ENCODE measurements at regions of chr11 and their contacts with region 1.

Region 1: DNA sequence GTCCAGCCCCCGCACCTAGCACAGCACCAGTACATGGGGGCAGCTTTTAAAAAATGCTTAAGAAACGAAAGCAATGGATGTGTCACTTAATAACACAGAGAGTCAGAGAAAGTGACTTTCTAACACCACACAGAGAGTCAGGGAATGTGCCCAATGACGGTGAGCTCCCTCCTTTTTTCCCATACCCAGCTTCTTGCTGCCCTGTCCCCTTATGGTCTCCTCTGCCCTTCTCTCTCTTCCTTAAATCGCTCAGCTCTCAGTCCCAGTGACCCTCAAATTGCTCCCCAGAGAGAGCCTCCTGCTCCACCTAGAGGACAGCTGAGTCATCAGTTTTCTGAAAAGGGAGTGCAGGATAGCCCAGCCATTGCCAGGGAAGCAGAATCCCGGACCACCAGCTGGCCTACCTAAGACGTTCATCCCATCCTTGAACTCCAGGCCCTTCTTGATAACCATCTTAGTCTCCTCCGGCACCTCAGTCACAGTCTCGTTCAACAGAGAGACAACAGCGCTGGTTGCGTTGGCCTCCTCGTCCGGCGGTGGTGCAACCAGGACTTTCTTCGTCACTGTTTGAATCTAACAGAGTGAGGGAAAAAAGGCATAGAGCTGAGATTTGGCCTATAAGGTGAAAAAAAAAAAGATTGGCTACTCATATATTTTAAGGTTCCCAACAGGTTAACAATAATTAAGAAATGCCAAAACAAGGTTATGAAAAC is 113.5 kb downstream of the SLC1A2 start:
- DNase-seq: peak; percentile 18 to 76 (median 53)
- ATAC-seq: peak; percentile 73
- H3K4me3 ChIP-seq: peak overlapping the region; percentile 12 to 39
- H3K4me3 Mint-ChIP-seq: peak overlapping the region; percentile 79
- H3K27ac ChIP-seq: peak overlapping the region in 1 of 2 experiments; percentile 29
- H3K27ac Mint-ChIP-seq: peak overlapping the region; percentile 92
- H3K4me1 ChIP-seq: peaks cover 18% of the 10 kb centered on the region
- H3K4me1 Mint-ChIP-seq: peaks cover 16% of the 10 kb centered on the region
- H3K27me3 ChIP-seq: no peaks in the 10 kb centered on the region
- H3K27me3 Mint-ChIP-seq: no peaks in the 10 kb centered on the region
- CTCF ChIP-seq: peak; percentile 63

Region 2: GRCh38 chr11:34585735-34586487 is 719.9 kb before region 1 on chr11:
- CTCF ChIA-PET with region 1: interaction called, 5 read pairs
- POLR2A ChIA-PET with region 1: no interaction called
- intact Hi-C with region 1: loop called in 1 of 2 experiments (anchors 5 kb)
- DNase-seq: peak in 2 of 9 experiments; percentile 53 to 60
- ATAC-seq: no peak
- H3K4me3 ChIP-seq: no peak overlapping the region
- H3K4me3 Mint-ChIP-seq: no peak overlapping the region
- H3K27ac ChIP-seq: no peak overlapping the region
- H3K27ac Mint-ChIP-seq: no peak overlapping the region
- H3K4me1 ChIP-seq: no peaks in the 10 kb centered on the region
- H3K4me1 Mint-ChIP-seq: peaks cover 5% of the 10 kb centered on the region
- H3K27me3 ChIP-seq: no peaks in the 10 kb centered on the region
- H3K27me3 Mint-ChIP-seq: peaks cover 30% of the 10 kb centered on the region
- CTCF ChIP-seq: peak; percentile 78

Region 3: GRCh38 chr11:34997952-34998528 is 307.8 kb before region 1 on chr11:
- CTCF ChIA-PET with region 1: interaction called, 89 read pairs
- POLR2A ChIA-PET with region 1: interaction called, 5 read pairs
- intact Hi-C with region 1: loop called (anchors 1 kb)
- DNase-seq: peak in 2 of 9 experiments; percentile 38 to 54
- ATAC-seq: peak; percentile 58
- H3K4me3 ChIP-seq: no peak overlapping the region
- H3K4me3 Mint-ChIP-seq: no peak overlapping the region
- H3K27ac ChIP-seq: no peak overlapping the region
- H3K27ac Mint-ChIP-seq: peak overlapping the region; percentile 49
- H3K4me1 ChIP-seq: peaks cover 6% of the 10 kb centered on the region
- H3K4me1 Mint-ChIP-seq: peaks cover 14% of the 10 kb centered on the region
- H3K27me3 ChIP-seq: no peaks in the 10 kb centered on the region
- H3K27me3 Mint-ChIP-seq: no peaks in the 10 kb centered on the region
- CTCF ChIP-seq: peak; percentile 95

Region 4: DNA sequence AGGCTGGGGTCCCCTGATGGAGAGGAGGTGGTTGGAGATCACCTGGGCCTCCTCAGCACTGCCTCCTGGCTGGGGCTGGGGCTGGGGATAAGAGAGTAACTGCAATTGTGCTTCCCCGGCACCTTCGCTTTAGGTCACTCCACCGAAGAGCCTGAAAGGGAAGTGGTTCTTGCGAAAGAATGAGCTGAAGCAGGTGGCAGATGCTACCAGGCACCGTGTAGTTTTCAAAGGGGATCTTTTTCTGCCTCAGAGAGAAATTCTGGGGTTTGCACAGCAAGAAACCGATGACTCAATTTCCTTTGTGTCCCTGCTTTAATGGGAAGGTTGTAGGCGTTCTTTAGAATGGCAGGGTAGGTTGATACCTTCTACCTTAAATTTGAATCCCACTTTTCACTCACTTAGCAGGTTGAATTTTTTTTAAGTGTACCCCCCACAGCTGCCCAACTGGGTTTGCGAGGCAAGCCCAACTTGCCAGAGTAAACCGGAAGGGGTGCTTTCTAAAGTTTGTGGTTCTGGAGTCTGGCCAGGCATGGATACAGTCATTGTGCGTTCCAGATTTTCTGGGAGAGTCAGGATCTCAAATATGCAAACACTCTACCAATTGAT is 161.6 kb before region 1 on chr11:
- CTCF ChIA-PET with region 1: interaction called, 24 read pairs
- POLR2A ChIA-PET with region 1: interaction called, 3 read pairs
- intact Hi-C with region 1: loop called in 1 of 2 experiments (anchors 5 kb)
- DNase-seq: peak in 8 of 9 experiments; percentile 35 to 89 (median 70)
- ATAC-seq: peak; percentile 51
- H3K4me3 ChIP-seq: peak overlapping the region; percentile 37 to 46
- H3K4me3 Mint-ChIP-seq: peak overlapping the region; percentile 79
- H3K27ac ChIP-seq: peak overlapping the region; percentile 54 to 77
- H3K27ac Mint-ChIP-seq: peak overlapping the region; percentile 98
- H3K4me1 ChIP-seq: peaks cover 70% of the 10 kb centered on the region
- H3K4me1 Mint-ChIP-seq: peaks cover 80% of the 10 kb centered on the region
- H3K27me3 ChIP-seq: no peaks in the 10 kb centered on the region
- H3K27me3 Mint-ChIP-seq: no peaks in the 10 kb centered on the region
- CTCF ChIP-seq: no peak

Region 5: GRCh38 chr11:35214792-35215193 is 91.0 kb before region 1 on chr11:
- CTCF ChIA-PET with region 1: interaction called, 11 read pairs
- POLR2A ChIA-PET with region 1: no interaction called
- intact Hi-C with region 1: no loop called
- DNase-seq: peak in 2 of 9 experiments; percentile 25 to 51
- ATAC-seq: peak; percentile 33
- H3K4me3 ChIP-seq: no peak overlapping the region
- H3K4me3 Mint-ChIP-seq: no peak overlapping the region
- H3K27ac ChIP-seq: peak overlapping the region in 1 of 2 experiments; percentile 50
- H3K27ac Mint-ChIP-seq: peak overlapping the region; percentile 92
- H3K4me1 ChIP-seq: peaks cover 43% of the 10 kb centered on the region
- H3K4me1 Mint-ChIP-seq: peaks cover 74% of the 10 kb centered on the region
- H3K27me3 ChIP-seq: no peaks in the 10 kb centered on the region
- H3K27me3 Mint-ChIP-seq: no peaks in the 10 kb centered on the region
- CTCF ChIP-seq: no peak

Region 6: GRCh38 chr11:35246745-35247144 is 59.1 kb before region 1 on chr11:
- CTCF ChIA-PET with region 1: interaction called, 11 read pairs
- POLR2A ChIA-PET with region 1: interaction called, 3 read pairs
- intact Hi-C with region 1: loop called in 1 of 2 experiments (anchors 5 kb)
- DNase-seq: no peak
- ATAC-seq: no peak
- H3K4me3 ChIP-seq: no peak overlapping the region
- H3K4me3 Mint-ChIP-seq: no peak overlapping the region
- H3K27ac ChIP-seq: peak overlapping the region; percentile 79 to 84
- H3K27ac Mint-ChIP-seq: peak overlapping the region; percentile 98
- H3K4me1 ChIP-seq: peaks cover 63% of the 10 kb centered on the region
- H3K4me1 Mint-ChIP-seq: peaks cover 80% of the 10 kb centered on the region
- H3K27me3 ChIP-seq: no peaks in the 10 kb centered on the region
- H3K27me3 Mint-ChIP-seq: no peaks in the 10 kb centered on the region
- CTCF ChIP-seq: no peak

Region 7: DNA sequence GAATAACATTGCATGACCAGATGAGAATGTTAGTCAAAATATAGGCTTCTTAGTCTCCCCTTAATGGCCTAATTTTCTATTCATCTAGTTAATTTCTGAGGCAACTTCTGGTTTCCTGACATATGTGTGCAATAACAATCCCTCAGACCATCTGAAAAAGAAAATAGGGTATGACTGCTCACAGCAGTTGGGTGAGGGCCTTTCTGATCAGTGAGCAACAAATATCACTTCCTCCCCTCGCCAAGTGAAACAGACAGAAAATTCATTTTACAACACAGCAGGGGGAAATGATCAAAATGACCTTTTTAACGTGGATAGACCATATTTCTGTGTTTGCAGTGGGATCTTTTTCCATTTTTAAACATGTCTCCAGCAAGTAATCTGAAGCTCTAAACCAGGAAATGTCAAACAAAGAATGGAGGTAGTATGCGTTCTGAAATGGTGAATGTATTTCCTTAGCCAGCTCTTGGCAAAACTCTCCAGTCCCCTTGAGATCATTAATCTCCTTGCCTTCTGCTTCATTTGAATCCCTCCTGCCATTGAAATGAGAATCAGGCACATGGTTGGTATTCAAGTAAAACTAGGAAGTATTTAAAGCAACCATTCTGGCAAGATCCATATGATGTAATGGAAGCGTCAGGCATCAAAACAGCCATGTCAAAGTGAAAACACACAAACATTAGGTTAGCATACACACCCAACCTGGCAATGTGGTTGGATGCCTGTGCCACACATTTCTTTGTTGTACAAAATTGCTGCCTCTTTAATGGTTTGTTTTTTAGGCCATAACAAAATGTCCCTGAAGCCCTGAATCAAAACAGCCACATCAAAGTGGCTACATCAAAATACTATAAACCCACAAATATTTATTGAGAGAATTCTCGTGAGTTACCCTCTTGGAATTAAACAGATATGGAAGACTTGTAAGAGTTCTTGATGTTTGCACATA is 13.4 kb after region 1 on chr11:
- CTCF ChIA-PET with region 1: interaction called, 15 read pairs
- POLR2A ChIA-PET with region 1: no interaction called
- intact Hi-C with region 1: no loop called
- DNase-seq: no peak
- ATAC-seq: no peak
- H3K4me3 ChIP-seq: no peak overlapping the region
- H3K4me3 Mint-ChIP-seq: no peak overlapping the region
- H3K27ac ChIP-seq: no peak overlapping the region
- H3K27ac Mint-ChIP-seq: no peak overlapping the region
- H3K4me1 ChIP-seq: no peaks in the 10 kb centered on the region
- H3K4me1 Mint-ChIP-seq: peaks cover 19% of the 10 kb centered on the region
- H3K27me3 ChIP-seq: no peaks in the 10 kb centered on the region
- H3K27me3 Mint-ChIP-seq: no peaks in the 10 kb centered on the region
- CTCF ChIP-seq: no peak

Region 8: DNA sequence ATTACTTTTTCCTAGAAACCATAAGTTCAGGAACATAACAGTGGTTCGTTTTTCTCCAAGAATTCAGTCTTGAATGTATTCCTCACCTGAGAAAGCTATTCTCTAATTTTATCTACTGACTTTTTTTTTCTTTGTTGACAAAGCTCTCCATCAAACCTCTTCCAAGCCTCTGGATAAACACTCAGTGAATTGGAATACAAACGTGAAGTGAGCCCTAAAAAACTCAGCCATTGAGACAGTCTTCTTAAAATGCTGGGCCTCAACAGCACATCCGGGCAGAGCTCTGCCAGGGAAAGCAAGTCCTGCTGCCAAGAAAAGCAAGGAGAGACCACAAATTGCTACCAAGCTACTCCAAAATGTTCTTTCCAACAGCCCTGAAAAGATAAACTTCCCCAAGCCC is 121.2 kb after region 1 on chr11:
- CTCF ChIA-PET with region 1: no interaction called
- POLR2A ChIA-PET with region 1: no interaction called
- intact Hi-C with region 1: no loop called
- DNase-seq: no peak
- ATAC-seq: no peak
- H3K4me3 ChIP-seq: no peak overlapping the region
- H3K4me3 Mint-ChIP-seq: no peak overlapping the region
- H3K27ac ChIP-seq: no peak overlapping the region
- H3K27ac Mint-ChIP-seq: no peak overlapping the region
- H3K4me1 ChIP-seq: no peaks in the 10 kb centered on the region
- H3K4me1 Mint-ChIP-seq: no peaks in the 10 kb centered on the region
- H3K27me3 ChIP-seq: peaks cover 0 to 13% of the 10 kb centered on the region in 2 experiments
- H3K27me3 Mint-ChIP-seq: peaks cover 60% of the 10 kb centered on the region
- CTCF ChIP-seq: no peak